ENCODE measurements at regions of chr5 and their contacts with region 1.

Region 1: DNA sequence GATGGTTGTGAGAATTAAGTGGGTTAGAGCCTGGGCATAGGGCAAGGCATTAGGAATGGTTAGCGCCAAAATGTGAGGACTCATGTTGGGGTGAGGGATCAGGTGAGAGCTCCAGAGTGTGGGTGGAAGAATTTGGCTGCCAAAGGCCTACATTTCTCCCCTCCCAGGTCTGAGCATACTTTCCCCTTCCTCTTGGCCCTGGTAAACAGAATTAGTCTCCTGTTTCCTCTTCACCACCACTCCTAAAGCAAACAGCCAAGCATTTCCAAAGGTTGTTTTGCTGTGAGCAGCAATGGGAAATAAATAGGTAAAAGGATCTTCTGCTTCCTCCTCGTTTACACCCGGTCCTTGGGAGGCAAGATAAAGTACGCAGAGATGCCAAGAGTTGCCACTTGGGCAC is 132.5 kb downstream of the ZSWIM6 start:
- DNase-seq: no peak
- H3K4me3 ChIP-seq: no peak overlapping the region
- CTCF ChIP-seq: no peak

Region 2: GRCh38 chr5:61449804-61450492 is 14.6 kb before region 1 on chr5:
- CTCF ChIA-PET with region 1: interaction called, 10 read pairs
- POLR2A ChIA-PET with region 1: interaction called, 6 read pairs
- DNase-seq: peak; percentile 81
- H3K4me3 ChIP-seq: no peak overlapping the region; the same call in 1 of the 2 replicates
- CTCF ChIP-seq: no peak

Region 3: GRCh38 chr5:61525512-61526206 is 61.1 kb after region 1 on chr5:
- CTCF ChIA-PET with region 1: no interaction called
- POLR2A ChIA-PET with region 1: no interaction called
- DNase-seq: no peak
- H3K4me3 ChIP-seq: no peak overlapping the region
- CTCF ChIP-seq: no peak

Measured in AG04449 (cell line).